ENCODE measurements at regions of chr1 and their contacts with region 1.

Region 1: GRCh38 chr1:205227584-205228006 is at the start of gene TMCC2:
- DNase-seq: peak; percentile 77
- H3K4me3 Mint-ChIP-seq: peak within 1 kb of the TSS; percentile 97
- H3K27ac Mint-ChIP-seq: peak within 1 kb of the TSS; percentile 93
- H3K4me1 Mint-ChIP-seq: peaks cover 46% of the 10 kb centered on the region
- H3K27me3 Mint-ChIP-seq: peaks cover 30% of the 10 kb centered on the region
- total RNA-seq, gene TMCC2: 25.0 and 25.2 TPM in 2 replicates

Region 2: GRCh38 chr1:205121660-205122488 is 105.7 kb before region 1 on chr1 and contains the start of gene RBBP5:
- intact Hi-C with region 1: loop called (anchors 1 kb)
- DNase-seq: peak; percentile 92
- H3K4me3 Mint-ChIP-seq: peak within 1 kb of the TSS; percentile 98
- H3K27ac Mint-ChIP-seq: peak within 1 kb of the TSS; percentile 98
- H3K4me1 Mint-ChIP-seq: peaks cover 39% of the 10 kb centered on the region
- H3K27me3 Mint-ChIP-seq: no peaks in the 10 kb centered on the region
- total RNA-seq, gene RBBP5: 21.5 and 24.7 TPM in 2 replicates

Region 3: GRCh38 chr1:205199090-205199930 is 28.3 kb before region 1 on chr1:
- intact Hi-C with region 1: loop called (anchors 1 kb)
- DNase-seq: peak; percentile 29
- H3K4me3 Mint-ChIP-seq: peak overlapping the region; percentile 63
- H3K27ac Mint-ChIP-seq: peak overlapping the region; percentile 94
- H3K4me1 Mint-ChIP-seq: peaks cover 82% of the 10 kb centered on the region
- H3K27me3 Mint-ChIP-seq: no peaks in the 10 kb centered on the region

Region 4: DNA sequence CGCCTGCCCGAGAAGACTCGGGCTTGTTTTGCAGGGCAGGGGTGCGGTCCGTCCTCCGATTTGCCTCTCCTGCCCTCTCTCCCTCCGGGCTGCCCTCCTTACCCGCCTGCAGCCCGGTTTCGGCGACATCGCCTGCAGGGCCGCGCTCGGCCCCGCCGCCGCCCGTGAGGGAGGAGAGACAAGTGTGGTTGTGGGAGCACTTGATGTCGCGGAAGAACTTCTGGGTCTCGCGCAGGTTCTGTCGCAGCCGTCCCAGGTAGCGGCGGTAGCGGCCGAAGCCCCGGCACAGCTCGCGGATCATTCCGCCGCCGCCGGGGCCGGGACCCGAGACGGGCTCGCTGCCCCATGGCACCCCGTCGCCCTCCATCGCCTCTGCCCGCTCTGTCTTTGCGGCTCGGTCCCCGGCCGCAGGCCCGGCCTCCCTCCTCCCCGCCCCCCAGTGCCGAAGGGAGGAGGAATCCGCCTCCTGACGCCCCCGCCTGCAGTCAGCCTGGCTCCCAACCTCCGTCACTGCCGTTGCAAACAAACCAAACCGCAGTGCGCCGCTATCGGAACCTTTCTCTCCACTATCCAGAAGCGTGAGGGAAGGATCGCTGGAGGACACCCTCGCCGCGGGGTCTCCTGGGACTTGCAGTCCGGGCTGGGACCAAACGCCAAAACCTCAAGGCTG is 16.3 kb before region 1 on chr1 and contains the start of gene DSTYK:
- intact Hi-C with region 1: loop called (anchors 1 kb)
- DNase-seq: peak; percentile 89
- H3K4me3 Mint-ChIP-seq: peak within 1 kb of the TSS; percentile 99
- H3K27ac Mint-ChIP-seq: peak within 1 kb of the TSS; percentile 94
- H3K4me1 Mint-ChIP-seq: peaks cover 49% of the 10 kb centered on the region
- H3K27me3 Mint-ChIP-seq: no peaks in the 10 kb centered on the region
- total RNA-seq, gene DSTYK: 34.2 and 35.9 TPM in 2 replicates

Region 5: DNA sequence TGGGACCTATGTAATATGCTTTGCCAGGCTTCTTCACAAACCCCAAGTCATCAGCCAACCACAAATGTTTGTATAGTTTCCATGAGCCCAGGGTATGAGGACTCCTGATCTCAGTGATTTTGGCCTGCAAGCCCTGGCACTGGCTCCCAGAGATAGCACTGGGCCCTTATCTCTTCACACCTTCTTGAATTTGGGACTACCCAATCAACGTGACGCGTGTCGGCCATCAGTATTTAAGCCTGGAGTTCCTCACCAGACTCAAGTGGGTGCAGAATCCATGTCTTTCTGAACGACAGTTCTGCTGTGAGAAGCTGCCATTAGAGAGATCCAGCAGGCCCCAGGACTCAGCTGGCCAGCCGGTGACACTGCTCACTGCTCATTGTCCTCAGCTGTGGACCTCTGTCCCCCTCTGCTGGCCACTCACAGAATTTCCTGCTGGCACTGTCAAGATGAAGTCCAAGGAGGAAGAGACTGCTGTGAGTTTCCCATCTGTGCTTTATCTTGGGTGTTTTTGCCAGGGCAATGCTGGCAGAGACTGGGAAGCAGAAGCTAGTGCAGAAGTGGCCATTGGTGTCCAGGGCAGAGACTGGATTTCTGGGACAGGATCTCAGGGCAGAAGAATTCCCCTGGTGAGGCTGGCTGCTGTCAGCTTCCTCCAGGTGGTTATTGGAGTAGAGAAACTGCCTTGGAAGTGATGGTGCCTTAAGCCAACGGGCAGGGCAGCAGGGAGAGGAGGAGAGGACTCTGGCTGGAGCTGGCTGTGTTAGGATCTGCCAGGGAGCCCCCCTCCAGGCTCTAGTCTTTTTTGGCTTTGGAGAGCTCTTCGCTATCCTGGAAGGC is 28.6 kb after region 1 on chr1:
- intact Hi-C with region 1: loop called (anchors 1 kb)
- DNase-seq: peak; percentile 74
- H3K4me3 Mint-ChIP-seq: no peak overlapping the region
- H3K27ac Mint-ChIP-seq: no peak overlapping the region
- H3K4me1 Mint-ChIP-seq: peaks cover 25% of the 10 kb centered on the region
- H3K27me3 Mint-ChIP-seq: no peaks in the 10 kb centered on the region

Region 6: DNA sequence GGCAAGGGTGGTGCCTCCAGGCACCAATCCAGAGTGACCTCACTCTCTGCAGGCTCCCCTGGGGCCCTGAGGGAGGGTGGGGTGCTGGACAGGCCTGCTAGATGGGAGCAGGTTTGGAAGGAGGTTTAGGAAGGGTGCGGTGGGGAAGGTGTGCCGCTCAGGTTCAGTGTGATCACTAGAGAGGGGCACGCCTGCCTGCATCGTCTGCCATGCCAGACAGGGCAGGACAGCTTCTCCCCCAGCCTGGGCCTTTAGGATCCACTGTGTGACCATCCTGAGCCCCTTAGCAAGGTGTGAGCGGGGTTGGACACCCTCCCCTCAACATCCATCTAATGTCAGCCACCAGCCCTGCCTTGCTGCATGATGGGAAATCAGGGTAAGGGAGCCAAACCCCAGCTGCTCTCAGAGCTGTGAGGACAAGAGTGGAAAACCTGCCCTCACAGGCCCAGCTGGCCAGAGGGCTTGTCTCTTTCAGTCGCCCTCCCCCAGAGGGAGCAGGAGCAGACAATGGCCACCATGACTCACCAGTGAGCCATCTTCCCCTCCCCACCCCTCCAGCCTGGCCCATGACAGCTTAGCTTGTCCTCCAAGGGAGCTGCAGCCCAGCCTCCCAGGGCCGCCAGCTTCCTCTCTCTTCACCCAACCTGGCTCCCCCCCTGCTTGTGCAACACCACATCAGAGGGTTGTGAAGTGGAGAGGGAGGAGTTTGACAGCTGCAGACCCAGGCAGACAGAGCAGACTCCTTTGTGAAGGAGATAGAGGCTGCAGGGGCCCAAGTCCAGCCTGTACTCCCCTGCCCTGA is 56.9 kb after region 1 on chr1:
- intact Hi-C with region 1: loop called (anchors 1 kb)
- DNase-seq: peak; percentile 84
- H3K4me3 Mint-ChIP-seq: peak overlapping the region; percentile 64
- H3K27ac Mint-ChIP-seq: peak overlapping the region; percentile 90
- H3K4me1 Mint-ChIP-seq: peaks cover 75% of the 10 kb centered on the region
- H3K27me3 Mint-ChIP-seq: peaks cover 9% of the 10 kb centered on the region